Dendritic cell treated with granulocyte-macrophage colony-stimulating factor and Interleukin-4, amounts not matched to agents 40 ng/mL and 50 ng/mL, for 4 days (primary cell): ENCODE measurements at regions of chr14 and their contacts with region 1.

Region 1: GRCh38 chr14:90301668-90302090 is 30.1 kb downstream of the NRDE2 start:
- H3K4me3 Mint-ChIP-seq: no peak overlapping the region
- H3K27ac Mint-ChIP-seq: peak overlapping the region; percentile 87
- H3K4me1 Mint-ChIP-seq: peaks cover 54% of the 10 kb centered on the region
- H3K27me3 Mint-ChIP-seq: no peaks in the 10 kb centered on the region

Region 2: GRCh38 chr14:90109646-90110257 is 191.9 kb before region 1 on chr14:
- intact Hi-C with region 1: no loop called
- H3K4me3 Mint-ChIP-seq: no peak overlapping the region
- H3K27ac Mint-ChIP-seq: no peak overlapping the region
- H3K4me1 Mint-ChIP-seq: peaks cover 6% of the 10 kb centered on the region
- H3K27me3 Mint-ChIP-seq: peaks cover 16% of the 10 kb centered on the region

Region 3: DNA sequence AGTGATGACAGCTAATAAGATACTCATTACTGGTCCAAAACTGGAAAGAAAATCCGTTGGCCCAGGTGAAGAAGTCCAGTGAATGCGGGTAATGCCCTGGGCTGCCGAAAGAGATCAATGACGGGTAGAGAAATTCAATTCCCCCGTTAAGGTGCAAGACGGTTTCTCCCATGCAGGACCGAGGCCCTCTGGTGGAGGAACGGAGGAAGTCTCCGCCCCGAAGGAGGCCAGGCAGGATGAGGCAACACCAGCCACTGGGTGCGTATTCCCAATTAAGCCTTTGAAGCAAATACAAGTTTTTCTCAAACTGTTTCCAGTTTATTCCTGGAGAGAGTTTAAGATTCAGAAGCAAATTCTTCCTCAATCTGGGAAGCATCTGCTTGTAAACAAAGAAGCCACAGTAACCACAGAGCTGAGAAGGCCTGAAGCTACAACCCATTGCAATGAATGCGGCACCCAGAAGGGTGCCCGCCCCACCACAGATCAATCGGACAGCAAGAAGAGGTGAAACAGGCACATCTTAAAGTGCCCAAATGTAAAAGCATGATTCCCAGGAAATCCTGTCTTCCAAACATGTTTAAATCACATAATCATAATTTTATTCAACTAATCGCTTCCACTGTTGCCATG is 396.0 kb after region 1 on chr14:
- intact Hi-C with region 1: loop called (anchors 2 kb)
- H3K4me3 Mint-ChIP-seq: no peak overlapping the region
- H3K27ac Mint-ChIP-seq: no peak overlapping the region
- H3K4me1 Mint-ChIP-seq: peaks cover 25% of the 10 kb centered on the region
- H3K27me3 Mint-ChIP-seq: no peaks in the 10 kb centered on the region